Heart left ventricle (tissue), 16 donors: ENCODE measurements at regions of chr15 and their contacts with region 1.

Region 1: GRCh38 chr15:81265944-81266775 is 57.8 kb downstream of the STARD5 start:
- DNase-seq: peak; percentile 75 to 88 (median 81)
- ATAC-seq: peak; percentile 87 to 93 (median 92)
- H3K4me3 ChIP-seq: peak overlapping the region in 2 of 12 donors; percentile 10 to 22
- H3K27ac ChIP-seq: no peak overlapping the region
- H3K4me1 ChIP-seq: peaks cover 0 to 26% (median 12%) of the 10 kb centered on the region in 12 donors
- H3K27me3 ChIP-seq: no peaks in the 10 kb centered on the region
- CTCF ChIP-seq: peak; percentile 76 to 92 (median 86)
- POLR2A ChIP-seq: no peak

Region 2: DNA sequence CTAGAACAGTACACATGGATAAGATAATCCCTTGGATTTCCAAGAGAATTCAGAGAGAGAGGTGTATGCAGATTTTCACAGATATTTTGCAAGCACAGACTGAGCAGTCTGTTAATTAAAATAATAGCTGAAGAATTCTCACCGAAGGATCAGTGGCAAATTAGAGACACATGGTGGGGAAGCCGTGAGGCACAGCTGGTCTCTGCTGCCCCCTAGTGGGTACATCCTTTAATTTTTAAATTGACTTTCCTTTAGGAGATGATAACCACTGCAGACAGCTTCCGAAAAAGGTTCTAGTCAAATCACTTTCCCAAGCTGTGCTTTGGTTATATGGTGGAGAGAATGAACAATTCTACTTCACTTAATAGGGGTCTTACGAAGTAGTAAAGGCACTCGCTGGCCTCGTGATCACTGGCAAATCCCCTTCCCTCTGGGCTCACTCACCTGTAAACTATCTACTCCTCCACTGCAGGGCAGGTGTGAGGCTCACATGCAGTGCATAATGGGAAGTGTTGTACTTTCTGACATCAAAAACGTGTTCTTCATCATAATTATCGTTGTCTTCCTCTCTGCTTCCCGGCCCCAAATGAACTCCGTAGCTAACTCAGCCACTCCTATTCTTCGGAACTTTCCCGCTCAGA is 296.0 kb before region 1 on chr15:
- intact Hi-C with region 1: loop called in 5 of 10 experiments (anchors 5 to 10 kb)
- DNase-seq: peak in 4 of 5 donors; percentile 44 to 57 (median 52)
- ATAC-seq: peak in 3 of 4 donors; percentile 61 to 79 (median 78)
- H3K4me3 ChIP-seq: no peak overlapping the region
- H3K27ac ChIP-seq: no peak overlapping the region
- H3K4me1 ChIP-seq: peaks cover 0 to 8% (median 1%) of the 10 kb centered on the region in 12 donors
- H3K27me3 ChIP-seq: no peaks in the 10 kb centered on the region
- CTCF ChIP-seq: peak; percentile 74 to 97 (median 92)
- POLR2A ChIP-seq: no peak

Region 3: GRCh38 chr15:80989518-80990478 is 276.4 kb before region 1 on chr15 and contains the start of gene MESD:
- intact Hi-C with region 1: loop called in 2 of 10 experiments (anchors 10 kb)
- DNase-seq: peak; percentile 98 to 99 (median 99)
- ATAC-seq: peak; percentile 97 to 99 (median 98)
- H3K4me3 ChIP-seq: peak within 1 kb of the TSS; percentile 75 to 97 (median 88)
- H3K27ac ChIP-seq: peak within 1 kb of the TSS; percentile 80 to 96 (median 92)
- H3K4me1 ChIP-seq: peaks cover 10 to 67% (median 55%) of the 10 kb centered on the region in 12 donors
- H3K27me3 ChIP-seq: no peaks in the 10 kb centered on the region
- CTCF ChIP-seq: no peak
- POLR2A ChIP-seq: peak; percentile 36 to 94
- total RNA-seq, gene MESD: 11.2 to 19.8 (median 14.8) TPM

Region 4: GRCh38 chr15:81106560-81106959 is 159.6 kb before region 1 on chr15:
- intact Hi-C with region 1: loop called (anchors 1 to 5 kb)
- DNase-seq: peak in 2 of 5 donors; percentile 18 to 39
- ATAC-seq: peak; percentile 47 to 85 (median 72)
- H3K4me3 ChIP-seq: no peak overlapping the region
- H3K27ac ChIP-seq: no peak overlapping the region
- H3K4me1 ChIP-seq: peaks cover 0 to 16% (median 4%) of the 10 kb centered on the region in 12 donors
- H3K27me3 ChIP-seq: no peaks in the 10 kb centered on the region
- CTCF ChIP-seq: peak; percentile 66 to 85 (median 76)
- POLR2A ChIP-seq: no peak

Region 5: DNA sequence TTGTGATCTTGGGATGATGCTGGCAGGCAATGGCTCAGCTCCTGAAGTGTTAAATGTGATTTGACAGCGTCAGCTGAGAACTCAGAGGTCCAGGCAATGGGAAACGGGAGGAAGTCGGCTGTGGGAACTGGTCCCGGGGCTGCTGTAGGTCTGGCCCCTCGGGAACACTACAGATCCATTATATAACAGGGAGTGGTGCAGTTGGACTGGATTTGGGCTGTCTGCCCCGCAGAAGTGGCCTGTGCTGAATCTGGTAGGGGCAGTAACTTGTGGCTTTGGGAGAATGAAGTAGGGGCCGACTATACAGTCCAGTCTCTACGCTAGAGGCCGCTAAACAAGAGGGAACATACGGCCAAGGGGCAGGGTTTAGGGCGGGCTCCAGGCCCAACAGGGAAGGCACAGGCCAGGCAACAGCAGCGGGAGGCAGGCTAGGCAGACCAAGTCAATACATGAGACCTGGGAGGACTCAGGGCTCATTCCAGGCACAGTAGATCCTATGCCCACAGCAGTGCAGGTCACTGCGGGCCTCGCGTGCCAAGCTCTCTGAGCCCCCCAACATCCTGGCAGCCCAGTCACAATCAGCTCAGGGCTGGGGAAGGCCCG is 89.8 kb before region 1 on chr15:
- intact Hi-C with region 1: loop called in 1 of 10 experiments (anchors 5 kb)
- DNase-seq: peak; percentile 59 to 85 (median 81)
- ATAC-seq: peak; percentile 81 to 93 (median 86)
- H3K4me3 ChIP-seq: no peak overlapping the region
- H3K27ac ChIP-seq: peak overlapping the region; percentile 40 to 95 (median 72)
- H3K4me1 ChIP-seq: peaks cover 0 to 44% (median 13%) of the 10 kb centered on the region in 12 donors
- H3K27me3 ChIP-seq: no peaks in the 10 kb centered on the region
- CTCF ChIP-seq: peak in 8 of 12 donors; percentile 6 to 61 (median 34)
- POLR2A ChIP-seq: no peak